ENCODE measurements at regions of chr16 and their contacts with region 1.

Region 1: DNA sequence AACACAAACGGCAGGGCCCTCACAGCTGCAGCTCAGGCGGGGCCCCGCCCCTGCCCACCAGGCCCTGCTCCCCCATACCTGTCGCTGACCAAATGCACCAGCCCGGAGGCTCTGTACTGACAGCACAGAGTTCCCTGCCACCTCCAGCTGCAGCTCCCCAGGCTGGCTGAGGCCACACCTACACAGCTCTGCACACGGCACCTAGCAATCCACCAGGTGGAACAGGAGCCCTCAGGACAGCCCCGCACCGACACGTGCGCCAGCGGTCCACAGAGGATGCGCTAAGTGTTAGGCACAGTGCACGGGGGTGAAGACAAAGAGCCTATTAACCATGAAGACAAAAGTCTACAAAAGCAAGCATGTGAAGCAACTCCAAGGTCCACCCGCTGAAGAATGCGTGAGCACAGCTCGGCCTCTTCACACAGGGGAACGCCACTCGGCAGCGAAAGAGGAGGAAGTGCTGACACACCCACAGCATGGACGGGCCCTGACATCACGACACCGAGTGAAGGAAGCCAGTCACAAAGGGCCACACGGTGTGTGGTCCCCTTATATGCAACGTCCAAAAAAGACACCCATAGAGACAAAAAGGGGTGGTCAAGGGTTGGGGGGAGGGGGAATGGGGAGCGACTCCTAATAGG is 5.3 kb downstream of the ZCCHC14 start:
- DNase-seq: peak; percentile 43
- ATAC-seq: no peak
- H3K4me3 Mint-ChIP-seq: peak overlapping the region; percentile 18
- H3K27ac Mint-ChIP-seq: no peak overlapping the region
- H3K4me1 Mint-ChIP-seq: peaks cover 75% of the 10 kb centered on the region
- H3K27me3 Mint-ChIP-seq: no peaks in the 10 kb centered on the region

Region 2: DNA sequence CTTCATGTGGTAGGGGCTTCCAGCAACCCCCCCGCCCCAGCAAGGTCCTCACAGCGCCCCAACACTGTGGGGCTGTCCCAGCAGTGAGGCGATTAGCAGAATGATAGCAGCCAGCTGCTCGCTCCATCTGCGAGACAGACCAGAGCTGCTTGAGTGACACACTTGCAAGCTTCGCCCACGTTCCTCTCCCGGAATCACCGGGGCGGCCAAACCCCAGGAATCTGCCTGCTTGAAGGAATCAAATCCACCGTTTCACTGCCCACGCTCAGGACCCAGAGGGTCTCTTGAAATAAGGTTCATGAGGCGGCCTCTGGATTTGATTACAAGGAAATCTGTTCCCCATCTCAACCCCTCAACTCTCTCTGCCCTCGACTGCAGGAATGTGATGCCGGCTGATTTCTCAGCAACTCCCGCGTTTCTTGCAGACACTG is 526.3 kb before region 1 on chr16:
- CTCF ChIA-PET with region 1: no interaction called
- POLR2A ChIA-PET with region 1: no interaction called
- intact Hi-C with region 1: no loop called
- DNase-seq: no peak
- ATAC-seq: no peak
- H3K4me3 Mint-ChIP-seq: no peak overlapping the region
- H3K27ac Mint-ChIP-seq: no peak overlapping the region
- H3K4me1 Mint-ChIP-seq: peaks cover 5% of the 10 kb centered on the region
- H3K27me3 Mint-ChIP-seq: peaks cover 7% of the 10 kb centered on the region

Region 3: GRCh38 chr16:87464691-87465300 is 22.7 kb before region 1 on chr16:
- CTCF ChIA-PET with region 1: interaction called, 5 read pairs
- POLR2A ChIA-PET with region 1: no interaction called
- intact Hi-C with region 1: loop called (anchors 1 to 2 kb)
- DNase-seq: peak; percentile 73
- ATAC-seq: peak; percentile 77
- H3K4me3 Mint-ChIP-seq: peak overlapping the region; percentile 60
- H3K27ac Mint-ChIP-seq: peak overlapping the region; percentile 90
- H3K4me1 Mint-ChIP-seq: peaks cover 46% of the 10 kb centered on the region
- H3K27me3 Mint-ChIP-seq: no peaks in the 10 kb centered on the region

Measured in activated CD4-positive, alpha-beta T cell treated with anti-CD3 and anti-CD28 coated beads for 36 hours (primary cell).